Activated B cell treated with CpG ODN at 0.5 μM for 24 hours (primary cell): ENCODE measurements at regions of chr4 and their contacts with region 1.

Region 1: DNA sequence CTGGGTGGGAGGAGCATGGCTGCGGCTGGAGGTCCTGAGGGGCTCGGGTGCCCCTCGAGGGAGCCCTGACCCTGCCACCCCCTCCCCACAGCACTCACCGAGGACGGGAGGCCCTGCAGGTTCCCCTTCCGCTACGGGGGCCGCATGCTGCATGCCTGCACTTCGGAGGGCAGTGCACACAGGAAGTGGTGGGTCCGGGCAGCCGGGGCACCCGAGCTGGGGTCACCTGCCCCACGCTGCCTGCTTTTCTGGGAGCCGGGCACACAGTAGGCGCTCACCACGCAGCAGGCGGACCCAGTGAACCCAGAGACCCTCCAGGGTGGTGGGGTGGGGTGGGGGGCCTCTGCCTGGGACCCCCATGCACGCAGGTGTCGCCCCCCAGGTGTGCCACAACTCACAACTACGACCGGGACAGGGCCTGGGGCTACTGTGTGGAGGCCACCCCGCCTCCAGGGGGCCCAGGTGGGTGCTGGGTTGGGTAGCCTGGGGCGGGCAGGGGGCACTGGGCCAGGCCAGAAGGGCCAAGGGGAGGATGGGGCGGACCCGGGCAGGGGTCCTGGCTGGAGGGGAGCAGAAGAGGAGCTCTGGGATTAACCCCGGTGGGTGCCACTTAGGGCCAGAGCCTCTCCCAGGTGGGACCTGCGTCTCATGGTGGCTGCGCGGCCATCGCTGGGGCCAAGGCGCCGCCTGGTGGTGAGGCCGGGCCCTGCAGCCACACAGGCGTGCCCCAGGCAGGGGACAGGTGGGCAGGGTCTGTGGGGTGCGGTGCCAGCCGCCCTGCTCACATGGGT is 1.4 kb downstream of the HGFAC start:
- DNase-seq: peak; percentile 82
- ATAC-seq: peak; percentile 94
- H3K4me3 Mint-ChIP-seq: no peak overlapping the region
- H3K27ac Mint-ChIP-seq: no peak overlapping the region
- H3K4me1 Mint-ChIP-seq: no peaks in the 10 kb centered on the region
- H3K27me3 Mint-ChIP-seq: no peaks in the 10 kb centered on the region
- CTCF ChIP-seq: peak; percentile 91

Region 2: GRCh38 chr4:3193531-3194203 is 249.5 kb before region 1 on chr4:
- CTCF ChIA-PET with region 1: interaction called, 5 read pairs
- POLR2A ChIA-PET with region 1: no interaction called
- intact Hi-C with region 1: loop called (anchors 1 kb)
- DNase-seq: no peak
- ATAC-seq: no peak
- H3K4me3 Mint-ChIP-seq: no peak overlapping the region
- H3K27ac Mint-ChIP-seq: no peak overlapping the region
- H3K4me1 Mint-ChIP-seq: no peaks in the 10 kb centered on the region
- H3K27me3 Mint-ChIP-seq: no peaks in the 10 kb centered on the region
- CTCF ChIP-seq: no peak

Region 3: DNA sequence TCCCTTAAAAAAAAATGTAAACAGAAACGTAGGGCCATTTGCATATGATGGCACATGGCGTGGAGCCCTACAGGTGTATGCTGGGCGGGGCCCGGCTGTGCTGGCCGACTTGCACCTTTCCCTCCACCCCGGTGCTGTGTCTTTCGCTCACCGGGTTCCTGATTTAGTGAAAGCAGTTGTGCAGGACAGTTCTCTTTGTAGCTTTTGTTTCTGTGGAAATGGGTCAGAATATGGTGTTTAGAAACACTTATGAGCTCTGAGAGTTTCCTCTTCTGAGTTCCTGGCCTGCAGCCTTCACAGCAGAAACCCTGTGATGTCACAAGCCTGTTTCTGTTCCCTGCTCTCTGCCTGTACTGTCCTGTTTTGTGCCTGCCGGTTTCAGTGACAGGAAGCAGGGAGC is 216.7 kb before region 1 on chr4:
- CTCF ChIA-PET with region 1: no interaction called
- POLR2A ChIA-PET with region 1: no interaction called
- intact Hi-C with region 1: loop called (anchors 10 kb)
- DNase-seq: no peak
- ATAC-seq: no peak
- H3K4me3 Mint-ChIP-seq: no peak overlapping the region
- H3K27ac Mint-ChIP-seq: no peak overlapping the region
- H3K4me1 Mint-ChIP-seq: no peaks in the 10 kb centered on the region
- H3K27me3 Mint-ChIP-seq: no peaks in the 10 kb centered on the region
- CTCF ChIP-seq: no peak

Region 4: GRCh38 chr4:3346146-3346545 is 97.0 kb before region 1 on chr4:
- CTCF ChIA-PET with region 1: interaction called, 37 read pairs
- POLR2A ChIA-PET with region 1: interaction called, 6 read pairs
- intact Hi-C with region 1: loop called (anchors 1 kb)
- DNase-seq: no peak
- ATAC-seq: peak; percentile 99
- H3K4me3 Mint-ChIP-seq: no peak overlapping the region
- H3K27ac Mint-ChIP-seq: no peak overlapping the region
- H3K4me1 Mint-ChIP-seq: peaks cover 4% of the 10 kb centered on the region
- H3K27me3 Mint-ChIP-seq: no peaks in the 10 kb centered on the region
- CTCF ChIP-seq: peak; percentile 18

Region 5: DNA sequence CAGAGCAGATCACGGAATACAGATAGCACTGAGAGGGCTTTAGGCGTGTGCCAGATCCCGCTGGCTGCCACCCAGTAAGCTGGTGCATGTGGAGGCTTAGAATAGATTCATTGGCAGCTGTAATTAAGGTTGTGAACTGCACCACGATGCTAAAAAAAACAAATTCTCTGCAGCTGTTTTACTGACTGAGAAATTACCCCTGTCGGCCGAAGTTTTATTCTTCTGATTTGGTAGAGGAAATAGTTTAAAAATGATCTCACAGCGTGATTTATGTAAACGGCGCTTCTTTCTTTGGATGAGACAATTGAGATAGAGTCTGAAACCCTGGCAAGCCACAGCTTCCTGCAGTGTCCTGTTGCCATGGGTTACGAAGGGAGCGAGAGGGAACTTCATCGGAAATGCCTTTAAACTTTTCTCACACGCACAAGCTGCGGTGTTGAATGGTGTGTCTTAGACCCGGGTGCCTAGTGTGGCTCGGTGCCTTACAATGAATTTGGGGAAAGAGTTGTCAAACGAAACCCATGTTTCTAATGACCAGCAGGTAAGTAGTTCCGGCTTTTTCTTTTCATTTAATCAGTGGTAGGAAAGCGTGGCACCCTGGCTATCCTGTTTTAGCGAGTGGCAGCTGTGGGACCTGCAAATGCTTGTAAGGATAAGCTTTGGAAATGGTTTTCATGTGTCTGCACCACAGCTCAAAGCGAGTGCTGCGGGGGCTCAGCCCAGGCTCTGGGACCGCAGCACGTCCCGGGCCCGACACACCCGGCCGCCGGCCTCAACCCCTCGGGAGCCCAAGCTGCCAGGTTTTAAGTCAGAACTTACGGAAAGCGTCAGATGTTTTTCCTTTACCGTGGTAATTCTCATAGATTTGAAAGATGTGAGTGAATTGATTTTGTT is 73.1 kb before region 1 on chr4:
- CTCF ChIA-PET with region 1: no interaction called
- POLR2A ChIA-PET with region 1: no interaction called
- intact Hi-C with region 1: loop called (anchors 1 kb)
- DNase-seq: no peak
- ATAC-seq: no peak
- H3K4me3 Mint-ChIP-seq: peak overlapping the region; percentile 64
- H3K27ac Mint-ChIP-seq: no peak overlapping the region
- H3K4me1 Mint-ChIP-seq: peaks cover 38% of the 10 kb centered on the region
- H3K27me3 Mint-ChIP-seq: peaks cover 11% of the 10 kb centered on the region
- CTCF ChIP-seq: no peak

Region 6: DNA sequence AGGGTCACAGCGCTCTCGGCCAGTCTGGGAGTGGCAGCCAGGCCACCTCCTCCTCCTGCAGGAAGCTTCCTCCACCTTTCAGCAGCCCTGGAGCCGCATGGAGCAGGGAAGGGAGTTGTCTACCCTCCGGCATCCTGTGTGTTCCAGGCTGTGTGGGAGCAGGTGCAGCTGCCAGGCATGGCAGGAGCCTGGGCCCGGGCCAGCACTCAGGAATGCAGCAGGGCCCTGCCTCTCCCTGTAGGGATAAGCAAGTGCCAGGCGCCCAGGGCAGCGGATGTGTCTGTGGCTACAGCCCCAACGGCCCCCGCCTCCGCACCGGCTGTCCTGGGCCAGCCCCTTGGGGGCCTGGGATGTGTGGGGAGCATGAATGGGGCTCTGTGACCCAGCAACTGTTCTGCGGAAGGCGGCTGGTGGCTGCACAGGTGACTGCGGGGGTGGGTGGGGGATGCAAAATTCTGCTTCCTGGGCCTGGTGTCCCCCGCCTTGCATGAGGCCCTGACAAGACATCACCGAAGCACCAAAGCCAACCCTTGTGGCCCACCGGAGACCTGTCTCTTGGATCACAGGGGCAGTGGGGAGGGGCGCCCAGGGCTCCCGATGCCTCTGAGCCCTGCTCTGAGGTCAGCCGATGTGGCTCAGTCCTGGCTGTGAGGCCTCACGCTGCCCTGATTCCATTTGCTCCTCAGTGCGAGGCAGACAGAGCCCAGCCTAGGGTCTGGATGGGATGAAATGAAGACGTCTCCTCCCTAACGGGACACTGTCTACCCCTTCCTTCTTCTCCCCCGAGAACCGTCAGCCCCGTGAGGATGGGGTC is 18.5 kb after region 1 on chr4:
- CTCF ChIA-PET with region 1: no interaction called
- POLR2A ChIA-PET with region 1: no interaction called
- intact Hi-C with region 1: no loop called
- DNase-seq: no peak
- ATAC-seq: no peak
- H3K4me3 Mint-ChIP-seq: no peak overlapping the region
- H3K27ac Mint-ChIP-seq: no peak overlapping the region
- H3K4me1 Mint-ChIP-seq: no peaks in the 10 kb centered on the region
- H3K27me3 Mint-ChIP-seq: peaks cover 18% of the 10 kb centered on the region
- CTCF ChIP-seq: no peak

Region 7: GRCh38 chr4:3480528-3481112 is 37.5 kb after region 1 on chr4:
- CTCF ChIA-PET with region 1: interaction called, 5 read pairs
- POLR2A ChIA-PET with region 1: no interaction called
- intact Hi-C with region 1: loop called (anchors 2 kb)
- DNase-seq: peak; percentile 81
- ATAC-seq: peak; percentile 47
- H3K4me3 Mint-ChIP-seq: no peak overlapping the region
- H3K27ac Mint-ChIP-seq: no peak overlapping the region
- H3K4me1 Mint-ChIP-seq: peaks cover 39% of the 10 kb centered on the region
- H3K27me3 Mint-ChIP-seq: peaks cover 2% of the 10 kb centered on the region
- CTCF ChIP-seq: peak; percentile 80